ENCODE measurements at regions of chr1 and their contacts with region 1.

Region 1: GRCh38 chr1:245045087-245045881 is 109.5 kb upstream of the KIF26B start:
- DNase-seq: no peak
- ATAC-seq: no peak
- H3K4me3 Mint-ChIP-seq: no peak overlapping the region
- H3K27ac Mint-ChIP-seq: no peak overlapping the region
- H3K4me1 Mint-ChIP-seq: no peaks in the 10 kb centered on the region
- H3K27me3 Mint-ChIP-seq: no peaks in the 10 kb centered on the region

Region 2: GRCh38 chr1:244796718-244797406 is 248.4 kb before region 1 on chr1:
- CTCF ChIA-PET with region 1: interaction called, 60 read pairs
- POLR2A ChIA-PET with region 1: no interaction called
- intact Hi-C with region 1: loop called (anchors 1 kb)
- DNase-seq: peak; percentile 70
- ATAC-seq: peak; percentile 40
- H3K4me3 Mint-ChIP-seq: no peak overlapping the region
- H3K27ac Mint-ChIP-seq: no peak overlapping the region
- H3K4me1 Mint-ChIP-seq: peaks cover 2% of the 10 kb centered on the region
- H3K27me3 Mint-ChIP-seq: no peaks in the 10 kb centered on the region

Region 3: GRCh38 chr1:244918421-244919319 is 126.6 kb before region 1 on chr1:
- CTCF ChIA-PET with region 1: interaction called, 5 read pairs
- POLR2A ChIA-PET with region 1: no interaction called
- intact Hi-C with region 1: loop called in 1 of 2 experiments (anchors 2 kb)
- DNase-seq: peak; percentile 66
- ATAC-seq: peak; percentile 86
- H3K4me3 Mint-ChIP-seq: peak overlapping the region; percentile 73
- H3K27ac Mint-ChIP-seq: peak overlapping the region; percentile 80
- H3K4me1 Mint-ChIP-seq: peaks cover 16% of the 10 kb centered on the region
- H3K27me3 Mint-ChIP-seq: peaks cover 3% of the 10 kb centered on the region

Region 4: GRCh38 chr1:245031041-245031440 is 14.2 kb before region 1 on chr1:
- CTCF ChIA-PET with region 1: interaction called, 15 read pairs
- POLR2A ChIA-PET with region 1: no interaction called
- intact Hi-C with region 1: no loop called
- DNase-seq: no peak
- ATAC-seq: no peak
- H3K4me3 Mint-ChIP-seq: no peak overlapping the region
- H3K27ac Mint-ChIP-seq: no peak overlapping the region
- H3K4me1 Mint-ChIP-seq: peaks cover 4% of the 10 kb centered on the region
- H3K27me3 Mint-ChIP-seq: no peaks in the 10 kb centered on the region

Region 5: DNA sequence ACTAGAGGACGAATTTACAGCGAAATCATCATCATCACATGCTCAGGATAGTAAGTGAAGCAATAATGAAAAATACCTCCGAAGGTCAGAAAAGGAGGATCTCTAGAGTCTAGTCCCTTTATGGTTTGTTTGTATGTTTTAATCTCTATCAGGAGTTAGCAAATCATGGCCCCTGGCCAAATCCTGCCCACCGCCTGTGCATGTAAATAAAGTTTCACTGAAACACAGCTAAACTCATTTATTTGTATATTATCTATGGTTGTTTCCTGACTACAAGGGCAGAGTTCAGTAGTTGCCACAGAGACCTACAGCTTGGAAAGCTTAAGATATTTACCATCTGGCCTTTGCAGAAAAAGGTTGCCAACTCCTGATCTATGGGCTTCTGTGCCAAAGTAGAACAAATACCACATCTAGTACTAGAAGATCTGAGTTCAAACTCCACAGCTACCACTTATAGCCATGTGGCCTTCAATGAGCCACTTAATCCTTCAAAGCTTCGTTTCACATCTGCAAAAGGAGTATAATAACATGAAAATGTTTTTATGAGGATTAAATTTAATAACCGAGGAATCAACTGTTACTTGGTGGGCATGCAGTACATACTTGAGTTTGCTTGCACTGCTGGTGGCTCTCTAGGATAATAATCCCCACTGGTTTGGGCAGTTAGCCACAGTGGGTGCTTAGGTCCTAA is 15.5 kb after region 1 on chr1:
- CTCF ChIA-PET with region 1: interaction called, 12 read pairs
- POLR2A ChIA-PET with region 1: no interaction called
- intact Hi-C with region 1: no loop called
- DNase-seq: no peak
- ATAC-seq: no peak
- H3K4me3 Mint-ChIP-seq: no peak overlapping the region
- H3K27ac Mint-ChIP-seq: no peak overlapping the region
- H3K4me1 Mint-ChIP-seq: no peaks in the 10 kb centered on the region
- H3K27me3 Mint-ChIP-seq: no peaks in the 10 kb centered on the region

Region 6: GRCh38 chr1:245107776-245108645 is 62.7 kb after region 1 on chr1:
- CTCF ChIA-PET with region 1: no interaction called
- POLR2A ChIA-PET with region 1: no interaction called
- intact Hi-C with region 1: no loop called
- DNase-seq: no peak
- ATAC-seq: no peak
- H3K4me3 Mint-ChIP-seq: no peak overlapping the region
- H3K27ac Mint-ChIP-seq: no peak overlapping the region
- H3K4me1 Mint-ChIP-seq: no peaks in the 10 kb centered on the region
- H3K27me3 Mint-ChIP-seq: no peaks in the 10 kb centered on the region

Region 7: GRCh38 chr1:245370905-245371581 is 325.8 kb after region 1 on chr1:
- CTCF ChIA-PET with region 1: no interaction called
- POLR2A ChIA-PET with region 1: no interaction called
- intact Hi-C with region 1: no loop called
- DNase-seq: no peak
- ATAC-seq: no peak
- H3K4me3 Mint-ChIP-seq: no peak overlapping the region
- H3K27ac Mint-ChIP-seq: no peak overlapping the region
- H3K4me1 Mint-ChIP-seq: no peaks in the 10 kb centered on the region
- H3K27me3 Mint-ChIP-seq: no peaks in the 10 kb centered on the region